GM12878 (cell line): ENCODE measurements at regions of chr5 and their contacts with region 1.

Region 1: GRCh38 chr5:135565725-135566421 is 12.9 kb downstream of the CXCL14 start:
- DNase-seq: no peak
- ATAC-seq: peak; percentile 92
- H3K4me3 ChIP-seq: no peak overlapping the region
- H3K27ac ChIP-seq: no peak overlapping the region
- H3K4me1 ChIP-seq: no peaks in the 10 kb centered on the region; the same call in 1 of the 2 replicates
- H3K27me3 ChIP-seq: peaks cover 0 to 3% of the 10 kb centered on the region in 2 experiments; a peak in 3 of 4 replicates
- CTCF ChIP-seq: peak; percentile 83 to 97 (median 94)
- EP300 ChIP-seq: no peak
- POLR2A ChIP-seq: no peak
- RAD21 ChIP-seq: peak; percentile 50; the same call in 1 of the 2 replicates

Region 2: GRCh38 chr5:135551593-135552447 is 14.1 kb before region 1 on chr5:
- CTCF ChIA-PET with region 1: interaction called, 104 read pairs
- POLR2A ChIA-PET with region 1: no interaction called
- RAD21 ChIA-PET with region 1: interaction called, 14 read pairs
- SMC1A ChIA-PET with region 1: interaction called, 14 read pairs
- in situ Hi-C with region 1: no loop called
- intact Hi-C with region 1: no loop called
- DNase-seq: peak; percentile 12
- ATAC-seq: peak; percentile 97
- H3K4me3 ChIP-seq: no peak overlapping the region
- H3K27ac ChIP-seq: no peak overlapping the region
- H3K4me1 ChIP-seq: no peaks in the 10 kb centered on the region
- H3K27me3 ChIP-seq: no peaks in the 10 kb centered on the region; a peak in 2 of 4 replicates
- CTCF ChIP-seq: peak; percentile 71 to 82 (median 80); a peak in 5 of 6 replicates
- EP300 ChIP-seq: no peak
- POLR2A ChIP-seq: no peak
- RAD21 ChIP-seq: peak; percentile 71

Region 3: GRCh38 chr5:135576075-135576599 is 10.3 kb after region 1 on chr5:
- CTCF ChIA-PET with region 1: interaction called, 20 read pairs
- POLR2A ChIA-PET with region 1: no interaction called
- RAD21 ChIA-PET with region 1: no interaction called
- SMC1A ChIA-PET with region 1: interaction called, 3 read pairs
- in situ Hi-C with region 1: no loop called
- intact Hi-C with region 1: no loop called
- DNase-seq: no peak
- ATAC-seq: no peak
- H3K4me3 ChIP-seq: no peak overlapping the region
- H3K27ac ChIP-seq: no peak overlapping the region
- H3K4me1 ChIP-seq: no peaks in the 10 kb centered on the region; the same call in 1 of the 2 replicates
- H3K27me3 ChIP-seq: peaks cover 0 to 16% of the 10 kb centered on the region in 2 experiments
- CTCF ChIP-seq: no peak
- EP300 ChIP-seq: no peak
- POLR2A ChIP-seq: no peak
- RAD21 ChIP-seq: no peak

Region 4: GRCh38 chr5:135582099-135582781 is 16.4 kb after region 1 on chr5:
- CTCF ChIA-PET with region 1: interaction called, 18 read pairs
- POLR2A ChIA-PET with region 1: no interaction called
- RAD21 ChIA-PET with region 1: no interaction called
- SMC1A ChIA-PET with region 1: interaction called, 3 read pairs
- in situ Hi-C with region 1: no loop called
- intact Hi-C with region 1: no loop called
- DNase-seq: no peak
- ATAC-seq: no peak
- H3K4me3 ChIP-seq: no peak overlapping the region
- H3K27ac ChIP-seq: no peak overlapping the region
- H3K4me1 ChIP-seq: no peaks in the 10 kb centered on the region
- H3K27me3 ChIP-seq: peaks cover 0 to 11% of the 10 kb centered on the region in 2 experiments
- CTCF ChIP-seq: no peak
- EP300 ChIP-seq: no peak
- POLR2A ChIP-seq: no peak
- RAD21 ChIP-seq: no peak

Region 5: GRCh38 chr5:137114529-137114928 is 1548.7 kb after region 1 on chr5:
- CTCF ChIA-PET with region 1: no interaction called
- POLR2A ChIA-PET with region 1: no interaction called
- RAD21 ChIA-PET with region 1: no interaction called
- SMC1A ChIA-PET with region 1: no interaction called
- in situ Hi-C with region 1: no loop called
- intact Hi-C with region 1: no loop called
- DNase-seq: no peak
- ATAC-seq: no peak
- H3K4me3 ChIP-seq: no peak overlapping the region
- H3K27ac ChIP-seq: no peak overlapping the region
- H3K4me1 ChIP-seq: no peaks in the 10 kb centered on the region
- H3K27me3 ChIP-seq: no peaks in the 10 kb centered on the region
- CTCF ChIP-seq: no peak
- EP300 ChIP-seq: no peak
- POLR2A ChIP-seq: no peak
- RAD21 ChIP-seq: no peak